SK-N-SH (cell line): ENCODE measurements at regions of chr9 and their contacts with region 1.

Region 1: GRCh38 chr9:136644598-136645351 is 17.9 kb upstream of the EGFL7 start:
- DNase-seq: peak; percentile 70
- H3K4me3 ChIP-seq: no peak overlapping the region; a peak in 1 of 4 replicates
- H3K27ac ChIP-seq: peak overlapping the region in 1 of 2 experiments; percentile 92; a peak in 1 of 4 replicates
- H3K4me1 ChIP-seq: peaks cover 0 to 33% of the 10 kb centered on the region in 2 experiments; a peak in 1 of 4 replicates
- H3K27me3 ChIP-seq: no peaks in the 10 kb centered on the region
- CTCF ChIP-seq: no peak
- EP300 ChIP-seq: no peak
- RAD21 ChIP-seq: no peak

Region 2: GRCh38 chr9:136631038-136632000 is 13.5 kb before region 1 on chr9:
- CTCF ChIA-PET with region 1: interaction called, 12 read pairs
- POLR2A ChIA-PET with region 1: no interaction called
- DNase-seq: peak; percentile 90
- H3K4me3 ChIP-seq: no peak overlapping the region; a peak in 1 of 4 replicates
- H3K27ac ChIP-seq: no peak overlapping the region
- H3K4me1 ChIP-seq: peaks cover 0 to 8% of the 10 kb centered on the region in 2 experiments; a peak in 1 of 4 replicates
- H3K27me3 ChIP-seq: peaks cover 15% of the 10 kb centered on the region
- CTCF ChIP-seq: peak; percentile 84
- EP300 ChIP-seq: no peak
- RAD21 ChIP-seq: peak; percentile 94